AG04450 (cell line): ENCODE measurements at regions of chr20 and their contacts with region 1.

Region 1: DNA sequence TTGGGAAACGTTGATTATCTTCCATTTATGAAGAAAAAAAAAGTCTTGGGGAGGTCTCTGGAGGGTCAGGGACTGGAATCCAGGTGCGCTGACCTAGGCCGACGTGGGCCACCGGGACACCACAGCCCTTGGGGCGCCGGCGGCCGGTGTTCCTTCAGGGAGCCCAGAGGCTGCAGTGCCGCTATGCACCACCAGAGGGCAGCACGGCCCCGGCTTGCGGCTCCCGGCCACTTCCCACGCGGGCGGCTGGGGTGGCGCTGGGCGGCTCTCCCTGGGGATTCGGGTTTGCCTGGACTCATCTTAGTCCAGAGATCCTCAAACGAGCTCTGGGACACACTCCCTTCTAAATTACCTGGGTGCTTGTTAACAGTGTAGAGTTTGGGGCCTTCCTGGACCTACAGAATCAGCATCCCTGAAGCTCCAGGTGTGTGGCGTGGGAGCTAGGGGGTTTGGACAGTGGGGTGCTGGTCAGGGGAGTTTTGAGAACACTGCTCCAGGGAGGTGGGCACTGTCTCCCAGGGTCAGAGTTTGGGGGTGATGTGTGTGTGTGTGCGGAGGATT is 23.0 kb upstream of the GTSF1L start:
- DNase-seq: no peak
- H3K4me3 ChIP-seq: no peak overlapping the region
- H3K27ac ChIP-seq: no peak overlapping the region
- H3K27me3 ChIP-seq: no peaks in the 10 kb centered on the region
- CTCF ChIP-seq: peak; percentile 98

Region 2: GRCh38 chr20:43472671-43473380 is 277.0 kb before region 1 on chr20:
- CTCF ChIA-PET with region 1: no interaction called
- POLR2A ChIA-PET with region 1: no interaction called
- DNase-seq: no peak
- H3K4me3 ChIP-seq: no peak overlapping the region
- H3K27ac ChIP-seq: no peak overlapping the region
- H3K27me3 ChIP-seq: no peaks in the 10 kb centered on the region
- CTCF ChIP-seq: no peak

Region 3: GRCh38 chr20:43728044-43728529 is 21.7 kb before region 1 on chr20:
- CTCF ChIA-PET with region 1: interaction called, 11 read pairs
- POLR2A ChIA-PET with region 1: no interaction called
- DNase-seq: no peak
- H3K4me3 ChIP-seq: no peak overlapping the region
- H3K27ac ChIP-seq: no peak overlapping the region
- H3K27me3 ChIP-seq: no peaks in the 10 kb centered on the region
- CTCF ChIP-seq: no peak

Region 4: DNA sequence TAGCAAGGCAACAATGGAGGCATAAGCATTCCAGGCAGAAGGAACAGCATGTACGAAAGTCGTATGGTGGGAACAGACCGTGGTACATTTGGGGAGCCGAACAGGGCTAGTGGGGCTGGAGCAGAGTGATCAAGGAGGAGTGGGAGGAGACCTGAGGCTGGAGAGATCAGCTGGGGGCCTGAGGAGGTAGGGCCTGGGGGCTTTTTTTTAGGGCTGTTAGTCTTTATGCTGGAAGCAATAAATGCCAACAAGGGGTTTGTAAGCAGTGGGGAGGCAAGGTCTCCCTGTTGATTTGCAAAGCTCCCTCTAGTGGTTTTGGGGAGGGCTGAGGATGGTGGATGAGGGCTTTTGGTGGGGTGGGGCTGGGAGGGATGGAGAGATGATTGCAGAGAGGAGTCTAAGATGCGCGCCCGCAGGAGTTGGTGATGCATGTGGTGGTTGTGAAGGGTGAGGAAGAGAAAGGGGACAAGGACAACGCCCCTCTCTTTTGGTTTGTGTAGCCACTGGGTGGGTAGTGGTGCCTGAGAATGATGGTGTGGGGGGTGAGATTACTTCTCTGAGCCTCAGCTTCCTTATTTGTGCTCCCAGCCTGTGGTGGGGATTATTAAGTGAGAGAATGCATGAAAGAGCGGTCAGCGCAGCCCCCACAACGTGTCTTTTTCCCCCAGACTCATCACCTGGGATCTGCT is 90.7 kb after region 1 on chr20:
- CTCF ChIA-PET with region 1: interaction called, 10 read pairs
- POLR2A ChIA-PET with region 1: interaction called, 3 read pairs
- DNase-seq: no peak
- H3K4me3 ChIP-seq: no peak overlapping the region
- H3K27ac ChIP-seq: no peak overlapping the region
- H3K27me3 ChIP-seq: no peaks in the 10 kb centered on the region
- CTCF ChIP-seq: peak; percentile 56

Region 5: GRCh38 chr20:44092551-44093248 is 342.9 kb after region 1 on chr20:
- CTCF ChIA-PET with region 1: interaction called, 15 read pairs
- POLR2A ChIA-PET with region 1: no interaction called
- DNase-seq: no peak
- H3K4me3 ChIP-seq: no peak overlapping the region
- H3K27ac ChIP-seq: no peak overlapping the region
- H3K27me3 ChIP-seq: no peaks in the 10 kb centered on the region
- CTCF ChIP-seq: peak; percentile 67